Gastrocnemius medialis (tissue), 4 donors: ENCODE measurements at regions of chr1 and their contacts with region 1.

Region 1: DNA sequence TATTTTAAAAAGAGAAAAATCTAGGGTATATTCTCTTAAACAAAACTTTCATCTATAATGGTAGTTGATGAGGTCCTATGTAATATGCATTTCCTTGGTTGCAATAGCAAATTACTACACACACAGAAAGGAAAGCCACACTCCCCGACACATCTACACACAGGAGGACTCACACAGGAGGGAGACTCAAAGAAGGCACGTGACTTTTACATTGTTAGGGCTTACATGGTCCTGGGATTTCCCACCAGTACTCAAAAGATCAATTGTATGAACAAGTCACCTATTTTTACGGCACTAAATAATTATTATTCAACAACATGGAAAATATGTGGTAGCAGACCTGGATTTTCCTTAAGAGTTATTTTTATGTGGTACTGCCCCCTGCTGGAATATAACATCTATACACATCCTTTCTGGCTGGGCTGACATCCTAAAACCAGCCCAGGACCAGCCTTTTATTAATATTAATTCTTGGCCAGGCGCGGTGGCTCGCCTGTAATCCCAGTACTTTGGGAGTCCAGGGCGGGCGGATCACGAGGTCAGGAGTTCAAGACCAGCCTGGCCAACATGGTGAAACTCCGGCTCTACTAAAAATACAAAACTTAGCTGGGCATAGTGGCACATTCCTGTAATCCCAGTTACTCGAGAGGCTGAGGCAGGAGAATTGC is 33.9 kb upstream of the LGALS8 start:
- DNase-seq: no peak
- ATAC-seq: no peak
- H3K4me3 ChIP-seq: no peak overlapping the region
- H3K27ac ChIP-seq: no peak overlapping the region
- H3K4me1 ChIP-seq: no peaks in the 10 kb centered on the region
- H3K27me3 ChIP-seq: no peaks in the 10 kb centered on the region
- CTCF ChIP-seq: peak in 4 of 5 experiments; percentile 41 to 57 (median 44)
- POLR2A ChIP-seq: no peak

Region 2: DNA sequence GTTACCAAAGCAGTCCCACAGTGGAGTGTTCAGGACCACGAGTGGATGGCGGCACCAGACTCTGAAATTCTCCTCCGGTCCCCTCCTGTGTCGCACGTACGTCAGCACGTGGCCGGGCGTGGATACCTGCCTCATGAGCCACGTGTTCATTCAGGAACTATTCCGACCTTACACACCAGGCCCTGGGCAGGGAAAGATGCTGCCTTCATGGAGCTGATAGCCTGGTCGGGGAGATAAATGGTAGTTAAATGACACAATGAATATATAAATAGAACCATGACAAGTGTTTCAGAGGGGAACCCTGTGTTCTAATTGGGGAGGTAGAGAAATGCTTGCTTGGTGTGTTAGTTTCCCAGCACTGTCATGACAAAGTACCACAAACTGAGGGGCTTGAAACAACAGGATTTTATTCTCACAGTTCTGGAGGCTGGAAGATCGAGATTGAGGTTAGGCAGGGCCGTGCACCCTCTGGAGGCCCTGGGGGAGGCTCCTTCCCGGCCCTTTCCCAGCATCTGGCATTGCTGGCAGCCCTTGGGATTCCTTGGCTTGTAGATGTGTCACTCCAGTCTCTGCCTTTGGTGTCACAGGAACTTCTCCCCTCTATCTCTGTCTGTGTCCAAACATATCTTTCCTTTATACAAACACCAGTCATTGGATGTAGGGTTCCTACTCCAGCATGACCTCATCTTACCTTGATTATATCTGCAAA is 376.4 kb before region 1 on chr1:
- in situ Hi-C with region 1: loop called (anchors 5 to 10 kb)
- intact Hi-C with region 1: loop called (anchors 1 kb)
- DNase-seq: no peak
- ATAC-seq: no peak
- H3K4me3 ChIP-seq: no peak overlapping the region
- H3K27ac ChIP-seq: no peak overlapping the region
- H3K4me1 ChIP-seq: no peaks in the 10 kb centered on the region
- H3K27me3 ChIP-seq: no peaks in the 10 kb centered on the region
- CTCF ChIP-seq: no peak
- POLR2A ChIP-seq: no peak

Region 3: GRCh38 chr1:236168716-236169429 is 321.0 kb before region 1 on chr1:
- in situ Hi-C with region 1: no loop called
- intact Hi-C with region 1: no loop called
- DNase-seq: no peak
- ATAC-seq: no peak
- H3K4me3 ChIP-seq: no peak overlapping the region
- H3K27ac ChIP-seq: no peak overlapping the region
- H3K4me1 ChIP-seq: no peaks in the 10 kb centered on the region
- H3K27me3 ChIP-seq: no peaks in the 10 kb centered on the region
- CTCF ChIP-seq: no peak
- POLR2A ChIP-seq: no peak